ENCODE measurements at regions of chr5 and their contacts with region 1.

Region 1: DNA sequence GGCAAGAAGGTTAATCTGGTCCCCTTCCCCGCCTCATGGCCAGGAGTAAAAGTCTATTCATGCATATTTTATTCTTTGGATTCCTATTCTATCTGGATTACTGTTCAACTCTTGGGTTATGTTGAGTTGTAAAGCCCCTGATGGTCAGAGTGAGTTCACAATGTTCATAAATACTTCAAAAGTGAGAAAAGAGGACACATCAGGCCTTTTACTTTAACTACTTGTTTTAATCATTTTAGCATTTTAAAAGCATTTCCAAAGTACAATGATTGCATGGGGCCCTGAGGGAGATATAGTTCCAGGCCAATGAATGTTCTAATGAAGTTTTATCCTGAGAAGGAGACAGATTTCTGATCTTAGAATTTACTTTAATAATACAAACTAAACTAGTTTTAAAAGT is 93.9 kb downstream of the BOD1 start:
- DNase-seq: no peak
- ATAC-seq: no peak
- H3K4me3 ChIP-seq: no peak overlapping the region
- H3K27ac ChIP-seq: no peak overlapping the region
- H3K4me1 ChIP-seq: no peaks in the 10 kb centered on the region
- H3K27me3 ChIP-seq: no peaks in the 10 kb centered on the region
- CTCF ChIP-seq: no peak

Region 2: DNA sequence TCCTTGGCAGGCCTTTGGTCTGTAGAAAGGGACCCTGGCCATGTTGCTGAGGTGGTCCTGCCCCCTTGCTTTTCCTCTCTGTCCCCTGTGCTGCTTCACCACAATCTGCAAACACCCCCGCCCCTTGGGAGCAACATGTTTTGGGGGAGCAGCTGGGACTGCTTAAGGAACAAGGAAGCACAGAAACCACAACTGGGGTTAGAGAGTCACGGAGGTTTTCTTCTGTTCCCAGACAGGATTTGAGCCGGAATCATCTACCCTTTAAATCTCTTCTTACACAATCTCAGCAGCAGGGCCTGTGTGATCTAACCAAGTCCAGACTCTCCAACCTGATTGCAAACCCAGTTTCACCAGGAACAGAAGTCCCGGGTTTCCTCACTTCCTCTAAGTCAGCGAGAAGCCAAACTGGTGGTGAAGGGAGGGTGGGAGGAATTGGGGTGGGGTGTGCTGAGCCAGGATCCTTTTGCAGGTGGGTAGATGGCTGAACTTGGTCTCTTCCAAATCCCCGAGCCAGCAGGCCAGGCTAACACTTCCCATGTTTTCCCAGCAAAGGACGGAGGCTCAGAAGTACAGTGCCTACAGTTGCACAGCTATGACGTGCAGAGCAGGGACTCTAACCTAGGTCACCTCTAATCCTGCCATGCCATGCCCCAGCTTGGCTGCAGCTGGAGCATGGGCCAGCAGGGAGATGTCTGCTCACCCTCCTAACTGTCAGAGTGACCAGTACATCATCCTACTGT is 1093.1 kb before region 1 on chr5:
- intact Hi-C with region 1: loop called in 1 of 2 experiments (anchors 5 kb)
- DNase-seq: peak in 1 of 2 donors; percentile 48
- ATAC-seq: peak; percentile 28 to 80 (median 70)
- H3K4me3 ChIP-seq: no peak overlapping the region
- H3K27ac ChIP-seq: peak overlapping the region; percentile 23
- H3K4me1 ChIP-seq: no peaks in the 10 kb centered on the region
- H3K27me3 ChIP-seq: peaks cover 0 to 2% (median 0%) of the 10 kb centered on the region in 3 donors
- CTCF ChIP-seq: no peak

Region 3: DNA sequence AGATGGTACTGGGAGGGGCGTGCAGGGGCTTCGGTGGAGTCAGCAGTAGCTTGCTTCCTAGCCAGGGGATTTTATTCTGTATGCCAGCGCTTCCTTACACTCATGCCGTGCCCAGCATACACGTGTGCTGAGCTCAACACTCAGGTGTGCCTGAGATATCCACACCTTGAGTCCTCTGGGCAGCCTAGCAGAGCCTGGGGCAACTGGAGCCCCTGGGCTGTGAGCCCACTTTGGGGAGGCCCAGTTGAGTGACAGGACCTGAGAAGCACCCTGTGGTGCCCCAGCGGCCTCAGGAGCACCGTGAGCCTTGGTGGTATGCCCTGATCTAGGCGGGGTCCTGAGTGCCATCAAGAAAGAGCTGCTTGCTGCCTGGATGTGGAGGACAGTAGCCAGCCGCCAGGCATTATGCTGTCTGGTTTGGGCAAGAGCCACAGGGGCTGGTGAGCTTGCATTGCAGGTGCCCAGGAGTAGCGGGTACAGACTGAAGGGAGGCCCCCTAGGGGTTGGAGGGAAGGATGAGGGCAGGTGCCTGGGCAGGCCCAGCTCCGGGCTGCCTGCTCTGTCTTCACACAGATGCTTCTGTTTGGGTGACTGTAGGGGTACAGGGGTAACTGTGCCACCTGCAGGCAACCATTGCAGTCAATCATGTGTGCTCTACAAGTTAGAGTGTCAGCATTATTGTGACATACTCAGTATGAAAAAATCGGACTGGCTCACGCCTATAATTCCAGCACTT is 335.3 kb before region 1 on chr5:
- intact Hi-C with region 1: no loop called
- DNase-seq: no peak
- ATAC-seq: peak in 1 of 4 donors; percentile 30
- H3K4me3 ChIP-seq: no peak overlapping the region
- H3K27ac ChIP-seq: no peak overlapping the region
- H3K4me1 ChIP-seq: no peaks in the 10 kb centered on the region
- H3K27me3 ChIP-seq: no peaks in the 10 kb centered on the region
- CTCF ChIP-seq: no peak

Measured in psoas muscle (tissue), 8 donors.